ENCODE measurements at regions of chr16 and their contacts with region 1.

Region 1: DNA sequence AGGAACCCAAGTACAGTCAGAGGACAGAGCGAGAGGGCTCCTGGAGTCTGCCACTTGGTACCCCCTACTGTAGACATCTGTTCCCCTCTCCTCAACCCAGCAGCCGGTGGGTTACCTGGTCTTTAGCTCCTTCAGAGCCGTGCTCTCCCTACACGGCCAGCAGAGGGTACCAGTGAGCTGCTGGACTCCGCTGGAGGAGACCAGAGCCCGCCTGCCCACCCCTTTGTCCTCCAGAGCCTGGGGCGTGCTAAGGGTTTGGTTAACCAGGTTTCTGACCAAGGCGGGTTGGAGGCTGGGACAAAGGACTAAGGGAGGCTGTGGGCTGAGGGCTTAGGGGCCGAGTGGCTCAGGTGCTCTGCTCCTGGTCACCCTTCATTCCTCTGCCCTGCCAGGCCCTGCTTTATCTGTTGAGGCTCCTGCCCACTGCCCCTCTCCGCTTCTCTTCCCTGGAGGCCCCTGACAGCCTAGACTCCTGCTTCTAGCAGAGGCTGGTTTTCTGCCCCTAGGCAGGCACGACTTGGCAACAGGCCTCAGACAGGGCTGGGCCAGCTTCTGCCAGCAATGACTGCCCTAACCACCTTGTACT is 2.7 kb upstream of the HSD11B2 start:
- DNase-seq: peak; percentile 67 to 86
- ATAC-seq: peak; percentile 52 to 86
- H3K4me3 ChIP-seq: no peak overlapping the region
- H3K27ac ChIP-seq: no peak overlapping the region
- H3K4me1 ChIP-seq: peaks cover 9% of the 10 kb centered on the region; the same call in 2 of the 3 replicates
- CTCF ChIP-seq: peak; percentile 78
- EP300 ChIP-seq: no peak
- POLR2A ChIP-seq: no peak
- RAD21 ChIP-seq: peak; percentile 71 to 75

Region 2: GRCh38 chr16:67028555-67029248 is 399.5 kb before region 1 on chr16 and contains the start of gene CBFB:
- CTCF ChIA-PET with region 1: no interaction called
- POLR2A ChIA-PET with region 1: no interaction called
- DNase-seq: peak; percentile 95 to 97
- ATAC-seq: peak; percentile 93 to 94
- H3K4me3 ChIP-seq: peak within 1 kb of the TSS; percentile 95
- H3K27ac ChIP-seq: peak within 1 kb of the TSS; percentile 72 to 93
- H3K4me1 ChIP-seq: peaks cover 12% of the 10 kb centered on the region
- CTCF ChIP-seq: no peak
- EP300 ChIP-seq: no peak
- POLR2A ChIP-seq: peak; percentile 96
- RAD21 ChIP-seq: no peak; a peak in 1 of 5 replicates
- polyA plus RNA-seq, gene CBFB: 35.9 and 61.3 TPM in 2 replicates

Region 3: DNA sequence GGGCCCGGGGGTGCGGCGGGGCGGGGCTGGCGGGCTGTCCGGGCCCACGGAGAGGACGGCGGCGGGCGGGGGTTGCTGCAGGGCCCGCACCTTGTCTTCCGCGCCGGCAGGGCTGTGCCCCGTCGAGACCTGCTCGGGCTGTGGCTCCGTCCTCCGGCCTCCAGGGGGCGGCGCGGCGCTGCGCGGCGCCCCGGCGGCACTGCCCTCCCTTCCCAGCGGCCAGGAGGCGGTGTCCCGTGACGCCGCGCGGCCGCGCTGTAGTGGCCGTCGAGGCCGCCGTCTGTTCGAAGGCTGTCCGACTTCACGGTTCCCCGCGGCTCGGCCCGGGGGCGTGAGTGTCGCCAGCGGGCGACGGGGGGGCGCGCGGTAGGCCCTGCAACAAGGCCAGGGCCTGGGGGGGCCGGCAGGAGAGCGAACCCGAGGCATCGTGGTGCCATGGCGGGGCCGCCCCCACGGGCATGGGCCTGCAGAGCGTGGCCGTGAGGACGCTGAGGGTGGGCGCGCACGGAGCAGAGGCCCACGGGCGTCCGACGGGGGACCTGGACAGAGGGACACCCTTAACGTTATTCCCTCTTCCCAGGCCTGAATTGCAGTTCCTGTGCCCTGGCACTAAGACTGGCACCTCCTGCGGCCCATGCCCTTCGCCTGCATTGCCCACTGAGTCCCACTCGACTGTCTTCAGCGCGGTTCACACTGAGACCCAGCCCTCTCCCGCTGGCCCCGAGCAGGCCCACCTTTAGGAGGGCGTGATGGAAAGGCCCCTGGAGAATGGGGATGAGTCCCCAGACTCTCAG is 148.7 kb before region 1 on chr16 and contains the start of gene PLEKHG4:
- CTCF ChIA-PET with region 1: interaction called, 14 read pairs
- POLR2A ChIA-PET with region 1: no interaction called
- DNase-seq: peak; percentile 86 to 93
- ATAC-seq: peak; percentile 86 to 91
- H3K4me3 ChIP-seq: peak within 1 kb of the TSS; percentile 80
- H3K27ac ChIP-seq: peak within 1 kb of the TSS; percentile 96 to 98
- H3K4me1 ChIP-seq: peaks cover 35% of the 10 kb centered on the region
- CTCF ChIP-seq: peak; percentile 78
- EP300 ChIP-seq: no peak
- POLR2A ChIP-seq: peak; percentile 65
- RAD21 ChIP-seq: peak; percentile 33 to 60; a peak in 4 of 5 replicates
- polyA plus RNA-seq, gene PLEKHG4: 10.0 and 17.7 TPM in 2 replicates

Region 4: DNA sequence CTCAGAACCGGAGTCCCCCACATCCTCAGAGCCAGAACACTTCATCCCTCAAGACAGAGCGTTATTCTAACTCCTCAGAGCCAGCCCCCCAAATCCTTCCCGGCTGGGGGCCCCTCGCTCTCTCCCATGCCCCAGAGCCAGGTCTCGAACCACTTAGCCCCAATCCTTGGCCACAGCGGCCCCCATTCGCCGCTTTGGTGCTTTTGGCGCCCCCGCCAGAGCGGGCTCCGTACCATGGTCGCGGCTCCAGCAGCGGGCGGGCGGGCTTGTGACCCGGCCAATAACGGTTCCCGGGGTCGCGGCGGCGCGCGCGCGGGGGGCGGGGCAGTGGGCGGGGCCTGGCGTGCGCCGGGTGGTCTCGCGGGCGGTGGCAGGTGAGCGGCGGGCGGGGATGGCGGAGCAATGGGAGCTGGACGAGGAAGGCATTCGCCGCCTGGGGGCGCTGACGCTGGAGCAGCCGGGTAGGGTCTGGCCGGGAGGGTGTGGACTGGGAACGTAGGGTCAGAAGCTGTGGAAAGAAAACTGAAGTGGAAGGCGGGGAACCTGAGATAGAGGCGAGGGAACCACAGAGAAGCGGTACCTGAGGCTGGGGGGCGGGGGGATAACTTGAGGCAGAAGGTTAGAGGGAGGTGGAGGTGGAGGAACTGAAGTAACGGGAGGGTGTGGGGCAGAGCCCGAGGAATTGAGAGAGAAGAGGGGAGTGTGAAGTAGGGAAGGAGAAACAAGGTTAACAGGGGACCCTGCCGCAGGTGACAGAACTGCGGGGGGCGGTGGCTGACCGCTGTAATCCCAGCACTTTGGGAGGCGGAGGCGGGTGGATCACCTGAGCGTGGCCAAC is 101.5 kb before region 1 on chr16 and contains the starts of genes KCTD19 and LRRC36:
- CTCF ChIA-PET with region 1: interaction called, 13 read pairs
- POLR2A ChIA-PET with region 1: no interaction called
- DNase-seq: peak; percentile 80 to 93
- ATAC-seq: peak; percentile 99
- H3K4me3 ChIP-seq: peak within 1 kb of the TSS; percentile 60
- H3K27ac ChIP-seq: peak within 1 kb of the TSS; percentile 70 to 82
- H3K4me1 ChIP-seq: peaks cover 15% of the 10 kb centered on the region
- CTCF ChIP-seq: peak; percentile 62
- EP300 ChIP-seq: no peak
- POLR2A ChIP-seq: no peak
- RAD21 ChIP-seq: peak; percentile 39 to 61
- polyA plus RNA-seq, gene KCTD19: 1.1 and 2.4 TPM in 2 replicates
- polyA plus RNA-seq, gene LRRC36: 0.57 and 0.93 TPM in 2 replicates

Region 5: DNA sequence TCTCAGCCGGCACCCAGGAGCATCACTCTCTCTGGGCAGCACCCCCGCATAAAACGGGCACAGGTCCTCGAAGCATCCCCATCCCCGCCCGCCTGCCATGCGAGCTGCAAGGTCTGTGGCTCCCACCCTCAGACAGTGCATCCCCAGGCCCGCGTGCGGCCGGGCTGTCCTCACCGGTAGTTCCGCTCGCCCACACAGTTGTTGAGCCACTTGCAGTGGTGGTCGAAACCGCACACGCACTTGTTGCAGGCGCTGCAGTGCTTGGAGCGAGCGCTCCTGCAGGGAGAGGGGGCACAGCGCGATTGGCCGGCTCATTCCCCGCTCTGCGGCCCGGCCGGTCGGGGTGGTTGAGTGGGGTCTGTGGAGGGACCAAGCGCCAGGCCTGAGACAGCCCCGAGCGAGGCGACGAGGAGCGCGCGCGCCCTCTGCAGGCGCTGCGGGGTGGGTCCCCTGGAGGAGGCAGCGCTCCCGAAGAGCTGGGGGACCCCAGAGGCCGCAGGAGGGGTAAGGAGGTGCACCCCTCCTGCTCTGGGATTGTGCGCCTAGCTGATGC is 29.0 kb before region 1 on chr16:
- CTCF ChIA-PET with region 1: interaction called, 10 read pairs
- POLR2A ChIA-PET with region 1: no interaction called
- DNase-seq: peak; percentile 37 to 52
- ATAC-seq: peak; percentile 51 to 83
- H3K4me3 ChIP-seq: no peak overlapping the region
- H3K27ac ChIP-seq: no peak overlapping the region
- H3K4me1 ChIP-seq: peaks cover 15% of the 10 kb centered on the region
- CTCF ChIP-seq: peak; percentile 62
- EP300 ChIP-seq: no peak
- POLR2A ChIP-seq: no peak
- RAD21 ChIP-seq: peak; percentile 63 to 70

Region 6: GRCh38 chr16:67447508-67448076 is 19.4 kb after region 1 on chr16:
- CTCF ChIA-PET with region 1: interaction called, 207 read pairs
- POLR2A ChIA-PET with region 1: interaction called, 4 read pairs
- DNase-seq: peak; percentile 64 to 77
- ATAC-seq: peak; percentile 54 to 76; a peak in 4 of 6 replicates
- H3K4me3 ChIP-seq: no peak overlapping the region
- H3K27ac ChIP-seq: 0 out of 6 replicates have a peak overlapping the region, but pooled peaks of 1 of the 2 experiments have one; percentile 3
- H3K4me1 ChIP-seq: peaks cover 20% of the 10 kb centered on the region
- CTCF ChIP-seq: peak; percentile 58
- EP300 ChIP-seq: no peak
- POLR2A ChIP-seq: no peak
- RAD21 ChIP-seq: peak; percentile 48 to 58

Region 7: GRCh38 chr16:67461600-67462592 is 33.7 kb after region 1 on chr16:
- CTCF ChIA-PET with region 1: interaction called, 176 read pairs
- POLR2A ChIA-PET with region 1: interaction called, 3 read pairs
- DNase-seq: no peak
- ATAC-seq: no peak
- H3K4me3 ChIP-seq: no peak overlapping the region
- H3K27ac ChIP-seq: no peak overlapping the region; a peak in 1 of 6 replicates
- H3K4me1 ChIP-seq: peaks cover 17% of the 10 kb centered on the region; the same call in 2 of the 3 replicates
- CTCF ChIP-seq: no peak
- EP300 ChIP-seq: no peak
- POLR2A ChIP-seq: no peak
- RAD21 ChIP-seq: no peak

Region 8: GRCh38 chr16:67480833-67481560 is 52.8 kb after region 1 on chr16 and contains the start of gene ATP6V0D1:
- CTCF ChIA-PET with region 1: interaction called, 29 read pairs
- POLR2A ChIA-PET with region 1: no interaction called
- DNase-seq: peak; percentile 95 to 98
- ATAC-seq: peak; percentile 91 to 93
- H3K4me3 ChIP-seq: peak within 1 kb of the TSS; percentile 91
- H3K27ac ChIP-seq: peak within 1 kb of the TSS; percentile 86 to 88
- H3K4me1 ChIP-seq: peaks cover 13% of the 10 kb centered on the region
- CTCF ChIP-seq: peak; percentile 88
- EP300 ChIP-seq: 0 out of 5 replicates have a peak, but pooled peaks of 1 of the 2 experiments have one; percentile 14
- POLR2A ChIP-seq: peak; percentile 62
- RAD21 ChIP-seq: peak; percentile 46 to 61; a peak in 4 of 5 replicates
- polyA plus RNA-seq, gene ATP6V0D1: 45.6 and 45.7 TPM in 2 replicates

Measured in A549 (cell line).